B cell (primary cell): ENCODE measurements at regions of chr1 and their contacts with region 1.

Region 1: GRCh38 chr1:28877132-28877781 is 37.1 kb upstream of the EPB41 start:
- DNase-seq: peak; percentile 84
- ATAC-seq: peak; percentile 78
- H3K4me3 ChIP-seq: no peak overlapping the region
- H3K4me3 Mint-ChIP-seq: no peak overlapping the region
- H3K27ac ChIP-seq: no peak overlapping the region
- H3K27ac Mint-ChIP-seq: no peak overlapping the region
- H3K4me1 ChIP-seq: peaks cover 4 to 5% of the 10 kb centered on the region in 2 donors
- H3K4me1 Mint-ChIP-seq: peaks cover 8% of the 10 kb centered on the region
- H3K27me3 ChIP-seq: no peaks in the 10 kb centered on the region
- H3K27me3 Mint-ChIP-seq: no peaks in the 10 kb centered on the region
- CTCF ChIP-seq: peak; percentile 99

Region 2: DNA sequence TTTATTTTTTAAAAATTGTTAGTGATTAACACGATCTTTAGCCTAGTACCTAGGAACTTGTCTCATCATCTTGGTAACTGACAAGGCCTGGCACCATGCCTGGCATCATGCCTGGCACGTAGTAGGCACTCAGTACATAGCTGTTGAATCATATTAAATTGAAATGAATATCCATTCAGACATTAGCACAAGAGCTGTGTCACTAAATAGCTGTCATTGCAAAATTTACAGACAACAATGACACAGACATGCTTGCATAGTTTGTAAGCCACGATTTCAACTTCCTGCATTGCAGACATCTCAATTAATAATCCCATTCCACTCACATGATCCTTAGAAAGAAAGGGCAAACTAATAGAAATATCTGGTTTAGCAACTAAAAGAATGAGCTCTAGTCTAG is 523.1 kb before region 1 on chr1:
- CTCF ChIA-PET with region 1: interaction called, 115 read pairs
- POLR2A ChIA-PET with region 1: no interaction called
- intact Hi-C with region 1: loop called (anchors 1 kb)
- DNase-seq: no peak
- ATAC-seq: no peak
- H3K4me3 ChIP-seq: no peak overlapping the region
- H3K4me3 Mint-ChIP-seq: no peak overlapping the region
- H3K27ac ChIP-seq: no peak overlapping the region
- H3K27ac Mint-ChIP-seq: no peak overlapping the region
- H3K4me1 ChIP-seq: no peaks in the 10 kb centered on the region
- H3K4me1 Mint-ChIP-seq: no peaks in the 10 kb centered on the region
- H3K27me3 ChIP-seq: no peaks in the 10 kb centered on the region
- H3K27me3 Mint-ChIP-seq: no peaks in the 10 kb centered on the region
- CTCF ChIP-seq: no peak

Region 3: DNA sequence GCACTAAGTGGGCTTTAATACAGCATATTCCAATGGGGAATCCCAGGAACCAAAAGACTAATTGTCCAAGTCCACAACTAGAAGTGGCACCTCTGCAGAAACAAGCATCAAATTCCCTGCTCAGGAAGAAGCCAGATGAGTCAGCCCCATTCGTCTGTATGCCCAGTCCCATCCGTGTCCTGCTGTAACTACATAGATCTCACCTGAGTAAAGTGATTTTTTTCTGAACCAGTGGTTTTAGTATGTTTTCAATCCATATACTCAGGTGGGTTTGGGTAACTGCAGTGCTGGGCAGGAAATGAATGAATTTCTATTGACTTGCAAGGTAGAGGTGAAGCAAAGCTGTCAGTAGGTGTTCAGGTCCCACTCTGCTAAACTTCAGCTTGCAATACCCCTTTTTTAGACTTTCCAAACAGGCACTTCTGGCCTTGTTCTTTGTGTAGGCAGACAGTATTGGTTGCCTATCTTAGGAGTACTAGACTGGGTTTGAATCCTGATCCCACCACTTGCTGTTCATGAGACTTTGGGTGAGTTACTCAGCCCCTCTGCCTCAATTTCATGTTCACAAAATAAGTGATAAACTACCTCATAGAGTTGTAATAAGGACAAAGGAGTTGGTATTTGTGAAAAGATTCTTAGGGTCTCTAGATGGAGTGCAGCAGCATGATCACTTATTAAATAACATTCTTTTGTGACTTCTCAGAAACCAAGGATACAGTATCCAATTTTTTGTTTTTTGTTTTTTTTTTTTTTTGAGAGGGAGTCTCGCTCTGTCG is 366.4 kb before region 1 on chr1:
- CTCF ChIA-PET with region 1: interaction called, 24 read pairs
- POLR2A ChIA-PET with region 1: no interaction called
- intact Hi-C with region 1: no loop called
- DNase-seq: peak; percentile 31
- ATAC-seq: no peak
- H3K4me3 ChIP-seq: no peak overlapping the region
- H3K4me3 Mint-ChIP-seq: peak overlapping the region; percentile 97
- H3K27ac ChIP-seq: peak overlapping the region in 1 of 2 donors; percentile 65
- H3K27ac Mint-ChIP-seq: peak overlapping the region; percentile 88
- H3K4me1 ChIP-seq: peaks cover 47 to 56% of the 10 kb centered on the region in 2 donors
- H3K4me1 Mint-ChIP-seq: peaks cover 56% of the 10 kb centered on the region
- H3K27me3 ChIP-seq: no peaks in the 10 kb centered on the region
- H3K27me3 Mint-ChIP-seq: no peaks in the 10 kb centered on the region
- CTCF ChIP-seq: no peak

Region 4: DNA sequence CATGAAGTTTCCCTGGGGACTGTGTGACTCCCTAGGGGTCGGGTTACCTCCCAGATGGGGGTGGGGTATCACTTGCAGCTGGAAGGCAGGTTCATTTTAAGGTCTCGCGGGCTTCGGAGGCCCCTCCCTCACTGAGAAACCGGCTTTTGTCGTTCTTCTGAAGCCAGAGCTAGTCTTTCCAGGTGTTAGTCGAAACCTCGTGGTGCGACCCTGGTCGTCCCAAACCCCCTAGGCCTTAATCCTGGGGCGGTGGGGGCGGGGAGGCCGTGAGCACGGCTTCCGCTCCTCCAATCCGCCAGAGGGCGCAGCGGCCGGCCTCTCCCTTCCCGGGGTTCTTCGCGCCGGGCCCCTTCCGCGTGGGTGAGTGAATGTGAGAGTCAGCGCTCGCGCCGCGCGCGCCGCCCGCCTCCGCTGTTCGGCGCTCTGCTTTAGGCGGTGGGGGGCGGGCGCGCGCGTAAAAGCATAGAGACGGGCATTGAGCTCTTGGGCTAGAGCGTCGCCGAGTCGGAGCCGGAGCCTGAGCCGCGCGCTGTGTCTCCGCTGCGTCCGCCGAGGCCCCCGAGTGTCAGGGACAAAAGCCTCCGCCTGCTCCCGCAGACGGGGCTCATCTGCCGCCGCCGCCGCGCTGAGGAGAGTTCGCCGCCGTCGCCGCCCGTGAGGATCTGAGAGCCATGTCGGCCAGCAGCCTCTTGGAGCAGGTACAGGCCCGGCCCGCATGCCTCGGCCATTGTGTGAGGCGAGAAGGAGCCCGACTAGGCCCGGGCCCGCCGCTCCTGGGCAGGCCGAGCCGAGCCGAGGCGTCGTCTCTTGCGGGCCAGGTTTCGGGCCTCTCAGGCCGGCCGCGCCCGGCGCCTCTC is 140.6 kb before region 1 on chr1 and contains the start of gene YTHDF2:
- CTCF ChIA-PET with region 1: interaction called, 15 read pairs
- POLR2A ChIA-PET with region 1: no interaction called
- intact Hi-C with region 1: no loop called
- DNase-seq: peak; percentile 99
- ATAC-seq: peak; percentile 91
- H3K4me3 ChIP-seq: peak within 1 kb of the TSS; percentile 75 to 91 (median 84)
- H3K4me3 Mint-ChIP-seq: peak within 1 kb of the TSS; percentile 95
- H3K27ac ChIP-seq: peak within 1 kb of the TSS; percentile 92 to 94
- H3K27ac Mint-ChIP-seq: peak within 1 kb of the TSS; percentile 95
- H3K4me1 ChIP-seq: peaks cover 16 to 23% of the 10 kb centered on the region in 2 donors
- H3K4me1 Mint-ChIP-seq: peaks cover 39% of the 10 kb centered on the region
- H3K27me3 ChIP-seq: no peaks in the 10 kb centered on the region
- H3K27me3 Mint-ChIP-seq: no peaks in the 10 kb centered on the region
- CTCF ChIP-seq: peak; percentile 91
- total RNA-seq, gene YTHDF2: 58.8 and 73.0 TPM in 2 replicates

Region 5: GRCh38 chr1:28792644-28793121 is 84.6 kb before region 1 on chr1:
- CTCF ChIA-PET with region 1: interaction called, 200 read pairs
- POLR2A ChIA-PET with region 1: interaction called, 3 read pairs
- intact Hi-C with region 1: no loop called
- DNase-seq: no peak
- ATAC-seq: no peak
- H3K4me3 ChIP-seq: no peak overlapping the region
- H3K4me3 Mint-ChIP-seq: no peak overlapping the region
- H3K27ac ChIP-seq: no peak overlapping the region
- H3K27ac Mint-ChIP-seq: no peak overlapping the region
- H3K4me1 ChIP-seq: no peaks in the 10 kb centered on the region
- H3K4me1 Mint-ChIP-seq: no peaks in the 10 kb centered on the region
- H3K27me3 ChIP-seq: no peaks in the 10 kb centered on the region
- H3K27me3 Mint-ChIP-seq: peaks cover 17% of the 10 kb centered on the region
- CTCF ChIP-seq: no peak

Region 6: DNA sequence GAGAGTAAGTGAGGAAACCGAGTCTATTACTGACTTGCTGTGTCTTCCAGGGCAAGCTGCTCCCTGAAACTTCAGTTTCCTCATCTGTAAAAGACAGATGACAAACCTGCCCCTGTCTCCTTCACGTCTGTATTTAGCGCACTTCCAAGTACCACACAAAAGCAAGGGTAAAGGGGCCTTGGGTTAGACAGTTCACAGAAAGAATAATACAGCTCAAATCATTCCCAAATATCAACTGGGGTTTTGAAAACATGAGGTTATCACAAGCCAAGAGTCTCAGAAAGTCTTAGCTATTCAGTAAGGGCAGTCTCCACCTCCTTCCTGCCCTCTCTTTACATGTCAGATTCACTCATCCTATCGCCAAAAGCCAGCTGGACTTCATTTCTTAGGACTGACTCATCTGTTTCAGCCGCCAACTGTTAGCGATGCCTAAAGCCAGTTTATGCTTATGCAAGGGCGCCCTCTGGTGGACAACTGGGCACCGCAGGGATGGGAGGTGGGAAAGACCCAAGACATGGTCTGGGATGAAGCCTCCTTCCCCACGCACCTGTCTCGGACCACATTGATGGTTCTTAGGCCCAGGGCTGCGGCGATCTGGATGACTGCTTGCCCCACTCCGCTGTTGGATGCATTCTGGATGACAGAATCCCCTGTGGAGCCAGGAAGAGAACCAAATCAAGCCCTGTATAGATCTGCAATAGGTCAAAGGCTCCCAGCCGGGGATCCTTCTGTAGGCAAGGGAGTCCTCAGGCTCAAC is 325.5 kb after region 1 on chr1:
- CTCF ChIA-PET with region 1: interaction called, 112 read pairs
- POLR2A ChIA-PET with region 1: no interaction called
- intact Hi-C with region 1: loop called (anchors 1 kb)
- DNase-seq: peak; percentile 86
- ATAC-seq: peak; percentile 97
- H3K4me3 ChIP-seq: no peak overlapping the region
- H3K4me3 Mint-ChIP-seq: no peak overlapping the region
- H3K27ac ChIP-seq: no peak overlapping the region
- H3K27ac Mint-ChIP-seq: peak overlapping the region; percentile 16
- H3K4me1 ChIP-seq: peaks cover 0 to 4% of the 10 kb centered on the region in 2 donors
- H3K4me1 Mint-ChIP-seq: peaks cover 2% of the 10 kb centered on the region
- H3K27me3 ChIP-seq: no peaks in the 10 kb centered on the region
- H3K27me3 Mint-ChIP-seq: no peaks in the 10 kb centered on the region
- CTCF ChIP-seq: peak; percentile 98

Region 7: DNA sequence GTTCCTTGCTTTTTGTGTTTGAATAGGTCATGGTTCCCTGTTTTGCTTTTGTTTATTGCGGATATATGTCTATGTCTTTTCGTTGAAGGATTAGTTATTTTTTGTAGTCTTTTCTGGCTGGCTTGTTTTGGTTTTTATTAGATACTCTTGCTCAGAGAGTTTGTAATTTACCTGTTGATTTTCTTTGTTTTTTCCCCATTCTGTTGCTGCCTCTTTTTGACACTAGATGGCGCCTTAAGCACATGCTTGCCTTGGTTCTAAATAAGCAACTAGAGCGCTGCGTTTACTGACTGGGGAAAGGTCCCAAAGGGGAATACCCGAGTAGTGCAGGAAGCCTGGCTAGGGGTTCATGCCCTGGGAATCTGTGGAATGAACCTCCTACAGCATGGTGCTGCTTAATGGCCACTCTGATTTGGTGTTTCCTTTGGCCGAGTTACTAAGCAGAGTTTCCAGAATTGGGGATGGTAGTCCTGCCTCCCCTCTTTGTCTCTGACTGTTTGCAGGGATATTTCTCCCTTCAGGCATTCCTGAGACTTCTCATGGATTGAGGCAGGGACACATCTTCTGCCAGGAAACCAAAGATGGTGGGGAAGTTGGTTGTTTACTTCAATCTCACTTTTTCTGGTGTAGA is 502.3 kb after region 1 on chr1:
- CTCF ChIA-PET with region 1: no interaction called
- POLR2A ChIA-PET with region 1: no interaction called
- intact Hi-C with region 1: no loop called
- DNase-seq: no peak
- ATAC-seq: no peak
- H3K4me3 ChIP-seq: no peak overlapping the region
- H3K4me3 Mint-ChIP-seq: no peak overlapping the region
- H3K27ac ChIP-seq: no peak overlapping the region
- H3K27ac Mint-ChIP-seq: no peak overlapping the region
- H3K4me1 ChIP-seq: no peaks in the 10 kb centered on the region
- H3K4me1 Mint-ChIP-seq: no peaks in the 10 kb centered on the region
- H3K27me3 ChIP-seq: no peaks in the 10 kb centered on the region
- H3K27me3 Mint-ChIP-seq: peaks cover 38% of the 10 kb centered on the region
- CTCF ChIP-seq: peak; percentile 22